ENCODE measurements at regions of chr17 and their contacts with region 1.

Region 1: DNA sequence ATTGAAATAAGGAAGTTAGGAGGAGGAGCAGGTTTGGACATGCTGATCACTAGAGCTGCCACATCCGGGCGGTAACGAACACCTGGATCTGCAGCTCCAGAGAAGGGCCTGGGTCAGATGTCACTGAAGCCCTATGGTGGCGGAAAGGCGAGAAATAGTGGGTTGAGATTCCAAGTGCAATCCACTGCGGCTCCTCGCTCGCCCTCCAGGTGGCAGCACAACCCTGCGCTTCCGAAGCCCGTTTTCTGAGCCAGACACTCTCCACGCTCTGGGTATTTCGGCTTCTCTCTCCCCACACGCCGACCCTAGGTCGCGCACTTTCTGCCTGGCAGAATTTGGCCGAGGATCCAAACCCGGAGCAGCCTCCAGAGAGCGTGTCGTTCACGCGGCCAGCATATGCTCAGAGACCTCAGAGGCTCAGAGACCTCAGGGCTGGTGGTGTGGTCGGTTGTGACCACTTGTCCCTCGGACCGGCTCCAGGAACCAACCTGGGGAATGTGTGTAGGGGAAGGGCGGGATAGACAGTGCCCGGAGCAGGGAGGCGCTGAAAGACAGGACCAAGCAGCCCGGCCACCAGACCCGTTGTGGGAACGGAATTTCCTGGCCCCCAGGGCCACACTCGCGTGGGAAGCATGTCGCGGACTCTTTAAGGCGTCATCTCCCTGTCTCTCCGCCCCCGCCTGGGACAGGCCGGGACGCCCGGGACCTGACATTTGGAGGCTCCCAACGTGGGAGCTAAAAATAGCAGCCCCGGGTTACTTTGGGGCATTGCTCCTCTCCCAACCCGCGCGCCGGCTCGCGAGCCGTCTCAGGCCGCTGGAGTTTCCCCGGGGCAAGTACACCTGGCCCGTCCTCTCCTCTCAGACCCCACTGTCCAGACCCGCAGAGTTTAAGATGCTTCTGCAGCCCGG is 744 bp upstream of the SLC2A4 start:
- DNase-seq: peak; percentile 79
- ATAC-seq: peak; percentile 72
- H3K4me3 ChIP-seq: peak overlapping the region; percentile 23 to 87 (median 31); a peak in 5 of 6 replicates
- H3K27ac ChIP-seq: peak overlapping the region; percentile 59
- H3K4me1 ChIP-seq: peaks cover 38% of the 10 kb centered on the region
- H3K27me3 ChIP-seq: no peaks in the 10 kb centered on the region
- CTCF ChIP-seq: peak; percentile 98
- EP300 ChIP-seq: no peak
- POLR2A ChIP-seq: no peak
- RAD21 ChIP-seq: peak; percentile 99

Region 2: GRCh38 chr17:7107012-7107754 is 173.6 kb before region 1 on chr17:
- CTCF ChIA-PET with region 1: no interaction called
- POLR2A ChIA-PET with region 1: no interaction called
- in situ Hi-C with region 1: no loop called
- intact Hi-C with region 1: no loop called
- DNase-seq: no peak
- ATAC-seq: no peak; the same call in 2 of the 3 replicates
- H3K4me3 ChIP-seq: no peak overlapping the region
- H3K27ac ChIP-seq: no peak overlapping the region
- H3K4me1 ChIP-seq: peaks cover 35% of the 10 kb centered on the region
- H3K27me3 ChIP-seq: no peaks in the 10 kb centered on the region
- CTCF ChIP-seq: no peak
- EP300 ChIP-seq: no peak
- POLR2A ChIP-seq: 0 out of 4 replicates have a peak, but pooled peaks have one; percentile 31 to 35
- RAD21 ChIP-seq: no peak

Region 3: GRCh38 chr17:7219812-7220581 is 60.8 kb before region 1 on chr17 and contains the starts of genes ACADVL and DLG4:
- CTCF ChIA-PET with region 1: no interaction called
- POLR2A ChIA-PET with region 1: interaction called, 16 read pairs
- in situ Hi-C with region 1: no loop called
- intact Hi-C with region 1: loop called (anchors 1 kb)
- DNase-seq: peak; percentile 75
- ATAC-seq: peak; percentile 85
- H3K4me3 ChIP-seq: peak within 1 kb of the TSS; percentile 73 to 93 (median 90)
- H3K27ac ChIP-seq: peak within 1 kb of the TSS; percentile 96
- H3K4me1 ChIP-seq: peaks cover 62% of the 10 kb centered on the region
- H3K27me3 ChIP-seq: peaks cover 0 to 4% of the 10 kb centered on the region in 2 experiments; a peak in 2 of 5 replicates
- CTCF ChIP-seq: 0 out of 2 replicates have a peak, but pooled peaks have one; percentile 8
- EP300 ChIP-seq: no peak
- POLR2A ChIP-seq: peak; percentile 88 to 94
- RAD21 ChIP-seq: peak; percentile 46; the same call in 1 of the 2 replicates
- total RNA-seq, gene ACADVL: 106 and 219 TPM in 2 replicates
- total RNA-seq, gene DLG4: 0.25 and 0.71 TPM in 2 replicates

Region 4: DNA sequence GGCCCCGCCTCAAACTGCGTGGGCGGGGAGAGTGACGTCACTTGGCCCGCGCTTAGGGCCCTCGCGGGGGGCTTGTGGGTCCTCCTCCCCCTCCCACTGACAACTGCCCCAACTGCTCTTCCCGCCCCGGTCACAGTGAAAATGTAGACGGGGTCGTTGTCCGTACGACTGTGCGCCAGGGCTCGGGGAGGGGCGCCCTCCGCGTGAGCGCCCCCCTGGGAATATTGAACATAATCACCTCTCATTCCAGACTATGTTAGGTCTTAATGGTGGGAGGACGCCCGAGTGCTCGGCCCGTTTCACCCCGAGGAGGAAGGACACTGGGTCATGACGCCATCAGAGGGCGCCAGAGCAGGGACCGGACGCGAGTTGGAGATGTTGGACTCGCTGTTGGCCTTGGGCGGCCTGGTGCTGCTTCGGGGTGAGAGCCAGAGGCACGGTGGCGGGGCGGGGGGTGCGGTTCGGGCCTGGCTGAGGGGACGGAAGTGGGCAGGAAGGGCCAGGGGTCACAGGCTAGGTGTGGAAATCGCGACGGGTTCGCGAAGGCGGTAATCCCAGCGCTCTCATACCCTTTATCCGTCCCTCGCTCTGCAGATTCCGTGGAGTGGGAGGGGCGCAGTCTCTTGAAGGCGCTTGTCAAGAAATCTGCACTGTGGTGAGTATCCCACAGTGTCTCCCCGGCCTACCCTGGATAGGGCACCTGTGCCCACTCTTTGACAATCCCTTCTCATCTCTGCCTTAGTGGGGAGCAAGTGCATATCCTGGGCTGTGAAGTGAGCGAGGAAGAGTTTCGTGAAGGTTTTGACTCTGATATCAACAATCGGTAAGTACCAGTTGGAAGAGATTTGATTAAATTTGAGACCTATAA is 28.4 kb before region 1 on chr17 and contains the start of gene ELP5:
- CTCF ChIA-PET with region 1: interaction called, 5 read pairs
- POLR2A ChIA-PET with region 1: interaction called, 18 read pairs
- in situ Hi-C with region 1: no loop called
- intact Hi-C with region 1: no loop called
- DNase-seq: peak; percentile 94
- ATAC-seq: peak; percentile 74
- H3K4me3 ChIP-seq: peak within 1 kb of the TSS; percentile 95 to 99 (median 96)
- H3K27ac ChIP-seq: peak within 1 kb of the TSS; percentile 99
- H3K4me1 ChIP-seq: peaks cover 43% of the 10 kb centered on the region
- H3K27me3 ChIP-seq: peaks cover 0 to 2% of the 10 kb centered on the region in 2 experiments; a peak in 1 of 5 replicates
- CTCF ChIP-seq: peak; percentile 96
- EP300 ChIP-seq: peak in 1 of 2 experiments; percentile 27; a peak in 1 of 4 replicates
- POLR2A ChIP-seq: peak; percentile 44 to 86
- RAD21 ChIP-seq: peak; percentile 59
- total RNA-seq, gene ELP5: 68.0 and 69.8 TPM in 2 replicates

Region 5: GRCh38 chr17:7296189-7296902 is 15.6 kb after region 1 on chr17:
- CTCF ChIA-PET with region 1: interaction called, 43 read pairs
- POLR2A ChIA-PET with region 1: interaction called, 35 read pairs
- in situ Hi-C with region 1: no loop called
- intact Hi-C with region 1: loop called (anchors 1 kb)
- DNase-seq: peak; percentile 56
- ATAC-seq: peak; percentile 63
- H3K4me3 ChIP-seq: peak overlapping the region in 1 of 3 experiments; percentile 50; a peak in 2 of 6 replicates
- H3K27ac ChIP-seq: no peak overlapping the region
- H3K4me1 ChIP-seq: peaks cover 41% of the 10 kb centered on the region
- H3K27me3 ChIP-seq: peaks cover 2 to 11% of the 10 kb centered on the region in 2 experiments; a peak in 2 of 5 replicates
- CTCF ChIP-seq: peak; percentile 93
- EP300 ChIP-seq: no peak
- POLR2A ChIP-seq: no peak
- RAD21 ChIP-seq: peak; percentile 99

Region 6: GRCh38 chr17:7329374-7329996 is 48.7 kb after region 1 on chr17:
- CTCF ChIA-PET with region 1: no interaction called
- POLR2A ChIA-PET with region 1: interaction called, 14 read pairs
- in situ Hi-C with region 1: no loop called
- intact Hi-C with region 1: no loop called
- DNase-seq: peak; percentile 97
- ATAC-seq: peak; percentile 81
- H3K4me3 ChIP-seq: peak overlapping the region; percentile 90 to 97 (median 91)
- H3K27ac ChIP-seq: peak overlapping the region; percentile 63
- H3K4me1 ChIP-seq: peaks cover 26% of the 10 kb centered on the region
- H3K27me3 ChIP-seq: peaks cover 0 to 4% of the 10 kb centered on the region in 2 experiments; a peak in 2 of 5 replicates
- CTCF ChIP-seq: 0 out of 2 replicates have a peak, but pooled peaks have one; percentile 35
- EP300 ChIP-seq: no peak; a peak in 1 of 4 replicates
- POLR2A ChIP-seq: peak; percentile 68 to 85
- RAD21 ChIP-seq: no peak

Region 7: GRCh38 chr17:7388856-7389255 is 108.1 kb after region 1 on chr17:
- CTCF ChIA-PET with region 1: no interaction called
- POLR2A ChIA-PET with region 1: no interaction called
- in situ Hi-C with region 1: no loop called
- intact Hi-C with region 1: no loop called
- DNase-seq: no peak
- ATAC-seq: no peak
- H3K4me3 ChIP-seq: no peak overlapping the region
- H3K27ac ChIP-seq: no peak overlapping the region
- H3K4me1 ChIP-seq: peaks cover 7% of the 10 kb centered on the region; the same call in 1 of the 2 replicates
- H3K27me3 ChIP-seq: no peaks in the 10 kb centered on the region
- CTCF ChIP-seq: no peak
- EP300 ChIP-seq: no peak
- POLR2A ChIP-seq: no peak
- RAD21 ChIP-seq: no peak